ENCODE measurements at regions of chr9 and their contacts with region 1.

Region 1: DNA sequence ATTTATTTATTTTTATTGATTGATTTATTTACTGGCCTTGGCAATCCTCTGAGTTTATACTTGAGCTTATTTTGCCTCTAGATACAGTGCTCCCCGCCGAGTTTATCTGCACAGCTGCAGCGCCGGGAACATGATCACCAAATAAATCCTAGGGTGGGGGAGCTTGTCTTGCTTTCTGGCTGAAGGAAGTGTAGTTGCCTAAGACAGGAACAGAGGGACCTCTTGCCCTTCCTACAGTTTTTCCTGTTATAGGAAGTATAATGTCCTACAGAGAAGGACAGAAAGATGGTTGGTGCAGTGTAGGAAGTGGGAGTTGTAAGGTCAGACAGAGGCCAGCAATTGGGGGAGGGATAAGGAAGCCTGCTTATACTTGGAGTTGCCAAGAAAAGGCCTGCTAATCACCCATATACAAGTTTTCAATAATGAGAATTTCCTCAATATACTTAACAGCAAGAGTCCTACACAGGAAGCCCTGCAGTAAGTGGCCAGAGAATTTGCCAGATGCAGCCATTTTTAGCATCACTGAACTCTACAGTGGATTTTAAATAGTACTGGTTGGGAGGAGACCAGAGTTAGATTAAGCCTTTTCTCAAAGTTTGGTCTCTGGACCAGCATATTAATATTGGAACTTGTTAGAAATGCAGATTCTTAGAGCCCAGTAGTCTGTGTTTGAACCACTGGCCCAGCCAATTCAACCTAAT is 7.7 kb downstream of the AOPEP start:
- DNase-seq: no peak
- H3K4me3 ChIP-seq: no peak overlapping the region
- H3K27ac ChIP-seq: no peak overlapping the region
- H3K4me1 ChIP-seq: no peaks in the 10 kb centered on the region
- H3K27me3 ChIP-seq: no peaks in the 10 kb centered on the region
- CTCF ChIP-seq: no peak

Region 2: DNA sequence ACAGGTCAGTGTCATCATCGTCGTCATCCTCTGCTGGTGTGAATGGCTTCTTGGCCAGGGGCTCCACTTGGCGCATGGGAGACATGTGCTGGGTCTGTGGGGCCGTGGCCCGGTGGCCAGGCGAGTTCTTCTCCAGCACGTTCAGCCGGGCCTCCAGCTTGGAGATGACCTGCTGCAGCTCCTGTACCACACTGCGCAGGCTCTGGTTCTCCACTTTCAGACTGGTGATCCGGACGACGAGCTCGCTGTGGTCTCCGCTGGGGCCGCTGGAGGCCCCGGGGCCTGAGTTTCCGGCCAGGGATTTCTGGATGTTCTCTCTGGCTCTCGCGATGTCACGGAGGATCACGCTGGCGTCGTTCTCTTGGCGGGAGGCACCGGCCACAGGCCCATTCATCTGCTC is 1897.0 kb before region 1 on chr9:
- CTCF ChIA-PET with region 1: no interaction called
- POLR2A ChIA-PET with region 1: no interaction called
- intact Hi-C with region 1: no loop called
- DNase-seq: no peak
- H3K4me3 ChIP-seq: no peak overlapping the region
- H3K27ac ChIP-seq: no peak overlapping the region
- H3K4me1 ChIP-seq: no peaks in the 10 kb centered on the region
- H3K27me3 ChIP-seq: no peaks in the 10 kb centered on the region
- CTCF ChIP-seq: no peak

Region 3: DNA sequence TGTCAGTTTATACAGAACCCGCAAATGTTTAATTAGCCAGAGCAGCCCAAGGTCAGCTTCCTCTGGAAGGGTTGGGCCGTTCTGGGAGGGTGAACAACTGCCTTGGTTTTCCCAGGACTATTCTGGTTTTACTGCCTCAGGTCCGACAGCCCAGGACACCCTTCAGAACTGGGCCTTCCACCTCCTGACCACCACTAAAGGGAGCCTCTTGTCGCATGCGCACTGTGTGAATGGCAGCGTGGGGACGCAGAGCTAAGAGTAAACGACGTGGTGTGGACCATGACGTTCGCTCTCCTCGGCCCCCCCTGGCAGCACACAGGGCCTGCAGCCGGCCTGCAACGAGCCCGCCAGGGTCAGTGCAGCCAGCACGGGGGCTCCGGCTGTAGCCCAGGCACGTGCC is 368.4 kb after region 1 on chr9:
- CTCF ChIA-PET with region 1: interaction called, 10 read pairs
- POLR2A ChIA-PET with region 1: no interaction called
- intact Hi-C with region 1: no loop called
- DNase-seq: no peak
- H3K4me3 ChIP-seq: no peak overlapping the region
- H3K27ac ChIP-seq: no peak overlapping the region
- H3K4me1 ChIP-seq: no peaks in the 10 kb centered on the region
- H3K27me3 ChIP-seq: no peaks in the 10 kb centered on the region
- CTCF ChIP-seq: no peak